Activated naive CD4-positive, alpha-beta T cell treated with anti-CD3 and anti-CD28 coated beads for 36 hours (primary cell): ENCODE measurements at regions of chr12 and their contacts with region 1.

Region 1: DNA sequence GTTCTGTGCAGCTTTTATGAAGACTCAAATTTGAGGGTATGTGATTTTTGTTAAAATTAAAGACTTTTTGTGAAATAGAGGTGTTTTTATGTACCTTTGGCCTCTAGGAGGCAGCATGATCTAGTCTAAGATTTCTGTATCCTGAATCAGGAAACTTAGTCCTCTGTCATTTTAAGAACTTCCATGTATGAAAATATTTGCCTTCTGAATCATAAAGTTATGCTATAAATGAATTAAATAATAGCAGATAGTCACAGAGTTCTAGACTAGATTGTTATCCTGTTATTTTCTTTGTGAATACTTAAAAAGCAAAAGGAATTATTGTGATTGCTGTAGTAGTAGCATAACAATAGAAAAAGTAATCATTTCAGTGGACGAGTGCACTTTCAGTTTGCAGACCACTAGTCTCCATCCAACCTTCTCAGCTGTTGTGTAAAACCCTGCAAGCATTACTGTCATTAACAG is 56.3 kb downstream of the FGD4 start:
- DNase-seq: peak; percentile 13
- H3K4me3 Mint-ChIP-seq: no peak overlapping the region
- H3K27ac Mint-ChIP-seq: no peak overlapping the region
- H3K4me1 Mint-ChIP-seq: no peaks in the 10 kb centered on the region
- H3K27me3 Mint-ChIP-seq: no peaks in the 10 kb centered on the region

Region 2: GRCh38 chr12:31650927-31651326 is 804.7 kb before region 1 on chr12:
- CTCF ChIA-PET with region 1: interaction called, 3 read pairs
- intact Hi-C with region 1: loop called (anchors 5 kb)
- DNase-seq: no peak
- H3K4me3 Mint-ChIP-seq: no peak overlapping the region
- H3K27ac Mint-ChIP-seq: no peak overlapping the region
- H3K4me1 Mint-ChIP-seq: peaks cover 10% of the 10 kb centered on the region
- H3K27me3 Mint-ChIP-seq: no peaks in the 10 kb centered on the region

Region 3: GRCh38 chr12:32365473-32366064 is 90.1 kb before region 1 on chr12:
- CTCF ChIA-PET with region 1: interaction called, 3 read pairs
- intact Hi-C with region 1: loop called (anchors 1 kb)
- DNase-seq: peak; percentile 69
- H3K4me3 Mint-ChIP-seq: no peak overlapping the region
- H3K27ac Mint-ChIP-seq: no peak overlapping the region
- H3K4me1 Mint-ChIP-seq: no peaks in the 10 kb centered on the region
- H3K27me3 Mint-ChIP-seq: no peaks in the 10 kb centered on the region

Region 4: DNA sequence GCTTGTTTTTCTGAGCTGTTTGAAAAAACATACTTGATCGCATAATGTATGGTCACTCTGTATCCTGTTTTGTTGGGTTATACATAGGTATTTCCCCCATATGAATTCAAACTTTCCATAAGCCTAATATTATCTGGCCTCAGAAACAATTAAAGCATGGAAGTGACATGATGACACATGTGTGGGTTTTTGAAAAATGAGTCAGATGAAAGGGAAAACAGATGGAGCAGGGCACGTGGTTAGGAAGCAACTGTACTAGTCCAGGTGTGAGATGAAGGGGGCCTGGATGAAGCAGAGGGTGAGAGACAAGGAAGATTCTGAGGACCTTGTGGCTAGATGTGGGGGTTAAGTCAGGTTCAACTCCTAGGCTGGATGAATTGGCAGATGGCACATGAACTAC is 130.8 kb after region 1 on chr12:
- CTCF ChIA-PET with region 1: no interaction called
- intact Hi-C with region 1: loop called (anchors 5 kb)
- DNase-seq: no peak
- H3K4me3 Mint-ChIP-seq: no peak overlapping the region
- H3K27ac Mint-ChIP-seq: no peak overlapping the region
- H3K4me1 Mint-ChIP-seq: peaks cover 48% of the 10 kb centered on the region
- H3K27me3 Mint-ChIP-seq: no peaks in the 10 kb centered on the region

Region 5: GRCh38 chr12:32659908-32660440 is 204.3 kb after region 1 on chr12:
- CTCF ChIA-PET with region 1: interaction called, 8 read pairs
- intact Hi-C with region 1: loop called (anchors 1 kb)
- DNase-seq: no peak
- H3K4me3 Mint-ChIP-seq: no peak overlapping the region
- H3K27ac Mint-ChIP-seq: no peak overlapping the region
- H3K4me1 Mint-ChIP-seq: peaks cover 3% of the 10 kb centered on the region
- H3K27me3 Mint-ChIP-seq: no peaks in the 10 kb centered on the region

Region 6: GRCh38 chr12:32671930-32672780 is 216.5 kb after region 1 on chr12:
- CTCF ChIA-PET with region 1: interaction called, 21 read pairs
- intact Hi-C with region 1: loop called (anchors 1 kb)
- DNase-seq: peak; percentile 40
- H3K4me3 Mint-ChIP-seq: no peak overlapping the region
- H3K27ac Mint-ChIP-seq: no peak overlapping the region
- H3K4me1 Mint-ChIP-seq: no peaks in the 10 kb centered on the region
- H3K27me3 Mint-ChIP-seq: peaks cover 3% of the 10 kb centered on the region

Region 7: DNA sequence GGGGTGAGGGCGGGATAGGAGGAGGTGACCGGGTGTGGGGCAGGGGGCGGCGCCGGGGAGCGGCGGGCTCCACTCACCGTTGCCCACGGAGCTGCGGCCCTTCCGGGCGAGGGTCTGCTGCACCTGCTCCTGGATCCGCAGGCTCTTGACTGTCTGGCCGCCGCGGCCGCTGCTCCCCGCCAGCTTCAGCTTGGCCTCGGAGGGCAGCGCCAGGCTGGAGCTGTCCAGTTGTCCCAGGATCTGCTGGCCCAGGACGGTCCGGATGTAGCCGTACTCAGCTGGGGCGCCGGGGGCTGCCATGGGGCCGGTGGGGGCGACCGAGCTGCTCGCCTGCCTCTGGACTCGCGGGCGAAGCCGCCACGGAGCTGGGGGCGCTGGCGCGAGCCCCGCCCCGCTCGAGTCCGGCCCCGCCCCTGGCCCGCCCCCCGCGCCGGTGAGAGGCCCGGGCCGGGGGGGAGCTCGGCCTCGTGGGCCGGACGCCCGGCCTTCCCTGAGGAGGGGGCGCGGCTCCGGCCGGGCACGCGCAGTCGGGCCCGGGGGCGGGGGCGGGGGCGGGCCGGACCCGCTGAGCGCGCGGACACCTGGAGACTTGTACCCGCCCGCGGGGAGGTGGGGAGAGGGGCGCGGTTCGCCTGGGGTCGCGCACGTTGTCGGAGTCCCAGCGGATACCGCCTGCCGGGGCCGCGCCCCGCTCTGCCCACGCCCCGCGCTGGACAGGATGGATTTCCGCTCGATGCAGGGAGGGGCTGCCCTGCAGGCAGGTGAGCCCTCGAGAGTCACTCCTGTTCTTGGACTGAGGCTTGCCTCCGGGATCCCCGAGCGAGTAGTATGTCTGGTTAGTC is 441.0 kb after region 1 on chr12 and contains the start of gene PKP2:
- CTCF ChIA-PET with region 1: no interaction called
- intact Hi-C with region 1: loop called (anchors 10 kb)
- DNase-seq: peak; percentile 34
- H3K4me3 Mint-ChIP-seq: peak within 1 kb of the TSS; percentile 65
- H3K27ac Mint-ChIP-seq: no peak within 1 kb of the TSS
- H3K4me1 Mint-ChIP-seq: peaks cover 18% of the 10 kb centered on the region
- H3K27me3 Mint-ChIP-seq: peaks cover 53% of the 10 kb centered on the region
- total RNA-seq, gene PKP2: 0.22 to 0.26 TPM